Calu3 (cell line): ENCODE measurements at regions of chr4 and their contacts with region 1.

Region 1: DNA sequence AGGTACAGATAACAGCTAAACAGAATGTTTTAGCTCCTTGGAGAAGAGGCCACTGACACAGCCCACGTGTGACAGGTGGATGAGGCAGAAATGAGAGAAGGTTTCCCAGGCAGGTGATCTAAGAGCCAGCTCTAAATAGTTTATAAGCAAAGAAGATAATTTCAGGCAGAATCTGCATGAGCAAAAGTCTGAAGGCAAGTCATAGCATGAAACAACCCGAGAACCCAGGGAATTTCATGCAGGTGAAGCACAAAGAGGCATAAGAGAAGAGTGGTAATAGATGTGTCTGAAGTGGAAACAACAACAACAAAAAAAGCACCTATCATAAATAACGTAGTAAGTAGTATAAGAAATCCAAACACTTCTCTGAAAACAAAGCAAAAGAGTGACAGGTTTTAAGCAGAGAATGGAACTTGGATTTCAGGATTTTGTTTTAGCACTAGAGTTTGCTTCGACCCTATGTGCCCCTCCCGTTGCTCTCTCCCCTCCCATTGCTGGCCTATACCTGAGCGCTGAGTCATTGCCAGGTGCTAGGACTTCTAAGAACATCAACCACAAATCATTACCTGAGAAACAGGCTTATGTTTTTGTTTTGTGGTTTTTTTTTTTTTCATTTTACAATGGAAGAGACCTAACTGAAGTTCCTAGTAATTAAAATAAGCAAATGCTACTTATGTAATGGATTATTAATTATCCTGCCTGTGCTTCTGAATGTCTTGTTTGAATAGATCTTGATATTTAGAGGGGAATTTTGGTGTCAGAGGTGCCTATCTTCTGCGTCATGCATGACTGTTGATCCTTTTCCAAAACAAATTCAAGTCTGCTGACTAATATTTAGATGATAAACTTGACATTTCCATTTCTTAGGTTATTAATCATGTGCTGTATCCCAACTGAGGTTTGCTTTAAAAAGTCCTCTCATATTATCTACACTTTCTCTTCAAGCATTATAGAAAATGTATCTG is 275.6 kb upstream of the CPEB2 start:
- DNase-seq: peak; percentile 54
- H3K4me3 Mint-ChIP-seq: no peak overlapping the region
- H3K27ac Mint-ChIP-seq: peak overlapping the region; percentile 13
- H3K4me1 Mint-ChIP-seq: peaks cover 17% of the 10 kb centered on the region
- H3K27me3 Mint-ChIP-seq: no peaks in the 10 kb centered on the region
- CTCF ChIP-seq: no peak

Region 2: GRCh38 chr4:14404730-14405129 is 322.0 kb before region 1 on chr4:
- CTCF ChIA-PET with region 1: no interaction called
- intact Hi-C with region 1: no loop called
- DNase-seq: no peak
- H3K4me3 Mint-ChIP-seq: no peak overlapping the region
- H3K27ac Mint-ChIP-seq: no peak overlapping the region
- H3K4me1 Mint-ChIP-seq: no peaks in the 10 kb centered on the region
- H3K27me3 Mint-ChIP-seq: no peaks in the 10 kb centered on the region
- CTCF ChIP-seq: no peak

Region 3: GRCh38 chr4:14827111-14827510 is 100.4 kb after region 1 on chr4:
- CTCF ChIA-PET with region 1: no interaction called
- intact Hi-C with region 1: no loop called
- DNase-seq: no peak
- H3K4me3 Mint-ChIP-seq: no peak overlapping the region
- H3K27ac Mint-ChIP-seq: no peak overlapping the region
- H3K4me1 Mint-ChIP-seq: peaks cover 13% of the 10 kb centered on the region
- H3K27me3 Mint-ChIP-seq: peaks cover 7% of the 10 kb centered on the region
- CTCF ChIP-seq: no peak

Region 4: DNA sequence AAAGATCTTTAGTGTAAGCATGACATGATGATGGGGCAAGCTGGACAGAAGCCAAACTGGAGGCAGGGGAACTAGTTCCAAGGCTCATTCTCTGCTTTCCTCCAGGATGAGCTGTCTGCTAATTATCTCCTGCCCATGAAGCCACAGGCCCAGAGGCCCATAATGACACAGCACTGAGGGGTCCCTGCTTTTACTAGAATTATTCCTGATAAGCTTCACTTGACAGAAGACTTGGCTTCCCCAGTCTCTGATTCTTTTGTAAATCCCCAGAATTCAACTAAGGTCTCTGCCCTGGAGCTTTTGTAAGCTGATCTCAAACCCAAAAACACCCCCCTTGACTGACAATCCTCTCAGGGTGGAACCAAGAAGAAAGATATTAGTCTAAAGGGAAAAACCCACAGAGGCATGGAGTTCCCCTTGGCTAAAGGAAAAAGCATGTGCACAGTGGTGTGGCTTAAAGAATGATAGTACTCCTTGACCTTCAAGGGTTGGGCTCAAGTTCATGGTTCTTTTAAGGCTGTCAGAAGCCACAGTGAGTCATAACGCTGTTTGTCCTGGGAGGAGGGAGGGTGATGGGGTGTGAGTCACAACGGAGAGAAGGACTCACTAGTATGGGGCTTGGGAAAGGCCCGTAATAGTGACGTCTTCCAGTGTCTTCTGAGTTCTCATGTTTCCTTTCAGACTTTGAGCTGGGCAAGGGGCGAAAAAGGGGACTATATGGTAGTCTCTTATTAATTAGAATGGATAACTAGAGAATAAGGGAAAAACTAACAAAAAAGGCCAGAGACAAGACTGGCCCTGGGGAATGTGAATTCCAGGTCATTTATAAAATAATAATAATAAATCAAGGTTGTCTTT is 129.6 kb after region 1 on chr4:
- CTCF ChIA-PET with region 1: no interaction called
- intact Hi-C with region 1: loop called (anchors 5 kb)
- DNase-seq: peak; percentile 67
- H3K4me3 Mint-ChIP-seq: no peak overlapping the region
- H3K27ac Mint-ChIP-seq: peak overlapping the region; percentile 66
- H3K4me1 Mint-ChIP-seq: peaks cover 18% of the 10 kb centered on the region
- H3K27me3 Mint-ChIP-seq: no peaks in the 10 kb centered on the region
- CTCF ChIP-seq: no peak